Calu3 (cell line): ENCODE measurements at regions of chr10 and their contacts with region 1.

Region 1: DNA sequence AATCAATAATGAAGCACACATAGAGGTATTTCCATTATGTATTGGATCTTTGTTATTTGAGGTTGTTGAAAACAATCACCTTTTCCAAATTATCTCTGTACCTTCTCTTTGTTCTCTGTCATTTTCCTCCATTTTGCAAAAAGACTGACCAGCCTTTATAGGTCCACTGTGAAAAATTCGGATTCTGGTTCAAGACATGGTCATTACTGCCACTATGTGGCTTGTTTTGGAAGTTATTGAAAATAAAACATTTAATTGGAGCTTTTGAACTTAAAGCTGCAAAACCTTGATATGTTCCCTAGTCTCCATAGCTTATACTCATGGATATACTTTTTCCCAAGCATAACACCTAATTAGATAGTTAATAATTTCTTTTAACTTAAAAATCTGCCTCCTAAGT is 1094.4 kb downstream of the NRG3 start:
- DNase-seq: no peak
- H3K4me3 Mint-ChIP-seq: no peak overlapping the region
- H3K27ac Mint-ChIP-seq: no peak overlapping the region
- H3K4me1 Mint-ChIP-seq: no peaks in the 10 kb centered on the region
- H3K27me3 Mint-ChIP-seq: no peaks in the 10 kb centered on the region
- CTCF ChIP-seq: no peak

Region 2: GRCh38 chr10:82796510-82796909 is 172.9 kb before region 1 on chr10:
- CTCF ChIA-PET with region 1: no interaction called
- intact Hi-C with region 1: loop called (anchors 1 kb)
- DNase-seq: no peak
- H3K4me3 Mint-ChIP-seq: no peak overlapping the region
- H3K27ac Mint-ChIP-seq: no peak overlapping the region
- H3K4me1 Mint-ChIP-seq: no peaks in the 10 kb centered on the region
- H3K27me3 Mint-ChIP-seq: no peaks in the 10 kb centered on the region
- CTCF ChIP-seq: no peak